Sigmoid colon (tissue), 7 donors: ENCODE measurements at regions of chr13 and their contacts with region 1.

Region 1: GRCh38 chr13:99501184-99501847 is at the start of gene TM9SF2:
- DNase-seq: peak; percentile 98
- H3K4me3 ChIP-seq: peak within 1 kb of the TSS; percentile 77 to 88 (median 81)
- H3K27ac ChIP-seq: peak within 1 kb of the TSS; percentile 89 to 91 (median 90)
- H3K4me1 ChIP-seq: peaks cover 5 to 49% (median 46%) of the 10 kb centered on the region in 4 donors
- H3K27me3 ChIP-seq: no peaks in the 10 kb centered on the region
- CTCF ChIP-seq: no peak
- EP300 ChIP-seq: peak in 1 of 4 donors; percentile 53
- POLR2A ChIP-seq: peak; percentile 19 to 80
- total RNA-seq, gene TM9SF2: 60.9 to 75.3 (median 64.5) TPM

Region 2: GRCh38 chr13:99200432-99201167 is 300.7 kb before region 1 on chr13 and contains the start of gene UBAC2:
- intact Hi-C with region 1: loop called (anchors 5 kb)
- DNase-seq: peak; percentile 97
- H3K4me3 ChIP-seq: peak within 1 kb of the TSS; percentile 67 to 92 (median 88)
- H3K27ac ChIP-seq: peak within 1 kb of the TSS; percentile 90 to 97 (median 96)
- H3K4me1 ChIP-seq: peaks cover 0 to 34% (median 10%) of the 10 kb centered on the region in 4 donors
- H3K27me3 ChIP-seq: no peaks in the 10 kb centered on the region
- CTCF ChIP-seq: peak in 2 of 4 experiments; percentile 6 to 15
- EP300 ChIP-seq: no peak
- POLR2A ChIP-seq: peak; percentile 87 to 88
- total RNA-seq, gene UBAC2: 47.4 to 54.6 (median 49.2) TPM

Region 3: DNA sequence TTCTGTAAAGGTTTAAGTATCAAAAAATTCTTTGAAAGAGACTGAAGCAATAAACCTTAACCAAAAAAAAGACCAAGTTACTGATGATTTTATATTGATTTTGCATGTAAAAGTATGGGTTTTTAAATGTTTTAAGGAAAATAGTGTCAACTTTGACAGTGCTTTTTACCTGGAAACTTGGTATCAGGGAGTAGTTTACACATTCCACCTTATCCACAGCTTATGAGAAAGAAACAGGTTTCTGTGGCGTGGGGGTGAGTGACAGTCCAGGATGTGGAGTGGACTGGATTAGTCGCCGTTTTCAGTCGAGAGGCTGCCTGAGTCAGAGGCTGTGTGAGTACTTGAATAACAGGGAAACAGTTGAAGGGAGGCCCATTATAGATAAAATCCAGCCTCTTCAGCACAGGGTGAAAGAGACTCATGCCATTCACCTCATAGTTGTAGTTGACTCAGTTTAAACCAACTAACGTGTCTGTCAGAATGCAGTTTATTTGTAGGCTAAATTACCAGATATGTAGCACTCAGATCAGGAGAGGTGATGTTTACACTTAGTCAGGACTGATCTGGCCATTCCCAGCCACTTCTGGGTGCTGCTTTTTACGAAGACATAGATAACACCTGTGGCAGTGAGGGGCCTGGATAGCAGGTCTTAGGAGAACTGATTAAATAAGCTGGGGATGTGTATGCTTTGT is 193.5 kb before region 1 on chr13:
- intact Hi-C with region 1: loop called (anchors 5 kb)
- DNase-seq: no peak
- H3K4me3 ChIP-seq: peak overlapping the region in 2 of 4 donors; percentile 48 to 50
- H3K27ac ChIP-seq: peak overlapping the region; percentile 64 to 83 (median 76)
- H3K4me1 ChIP-seq: peaks cover 0 to 63% (median 41%) of the 10 kb centered on the region in 4 donors
- H3K27me3 ChIP-seq: no peaks in the 10 kb centered on the region
- CTCF ChIP-seq: no peak
- EP300 ChIP-seq: no peak
- POLR2A ChIP-seq: no peak

Region 4: DNA sequence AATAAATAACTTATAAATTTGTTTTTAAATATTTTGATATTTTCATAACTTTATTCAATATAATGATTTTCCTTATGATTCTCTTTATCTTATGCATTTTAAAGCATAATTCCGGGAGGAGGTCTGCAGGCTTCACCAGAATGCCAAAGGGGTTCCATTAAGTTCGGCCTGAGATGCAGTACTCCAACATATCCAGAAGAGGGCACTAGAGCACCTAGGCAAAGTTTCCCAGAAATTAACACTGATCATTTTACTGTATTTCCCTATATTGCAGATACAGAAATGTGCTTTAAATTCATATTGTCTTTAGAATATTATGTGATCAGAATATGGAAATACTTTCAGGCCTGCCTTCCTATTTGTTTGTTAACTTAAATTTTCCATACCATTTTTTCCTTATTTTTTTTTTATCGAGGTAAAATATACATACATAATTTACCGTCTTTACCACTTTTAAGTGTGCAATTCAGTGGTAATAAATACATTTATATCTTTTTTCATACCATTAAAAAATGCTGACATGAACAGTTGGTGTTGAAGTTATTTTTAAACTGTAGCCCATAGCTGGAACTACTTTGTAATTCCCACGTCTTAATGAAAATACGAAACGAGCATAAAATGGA is 58.9 kb before region 1 on chr13:
- intact Hi-C with region 1: loop called (anchors 5 kb)
- DNase-seq: no peak
- H3K4me3 ChIP-seq: no peak overlapping the region
- H3K27ac ChIP-seq: no peak overlapping the region
- H3K4me1 ChIP-seq: no peaks in the 10 kb centered on the region
- H3K27me3 ChIP-seq: no peaks in the 10 kb centered on the region
- CTCF ChIP-seq: peak; percentile 49 to 96 (median 86)
- EP300 ChIP-seq: no peak
- POLR2A ChIP-seq: no peak

Region 5: DNA sequence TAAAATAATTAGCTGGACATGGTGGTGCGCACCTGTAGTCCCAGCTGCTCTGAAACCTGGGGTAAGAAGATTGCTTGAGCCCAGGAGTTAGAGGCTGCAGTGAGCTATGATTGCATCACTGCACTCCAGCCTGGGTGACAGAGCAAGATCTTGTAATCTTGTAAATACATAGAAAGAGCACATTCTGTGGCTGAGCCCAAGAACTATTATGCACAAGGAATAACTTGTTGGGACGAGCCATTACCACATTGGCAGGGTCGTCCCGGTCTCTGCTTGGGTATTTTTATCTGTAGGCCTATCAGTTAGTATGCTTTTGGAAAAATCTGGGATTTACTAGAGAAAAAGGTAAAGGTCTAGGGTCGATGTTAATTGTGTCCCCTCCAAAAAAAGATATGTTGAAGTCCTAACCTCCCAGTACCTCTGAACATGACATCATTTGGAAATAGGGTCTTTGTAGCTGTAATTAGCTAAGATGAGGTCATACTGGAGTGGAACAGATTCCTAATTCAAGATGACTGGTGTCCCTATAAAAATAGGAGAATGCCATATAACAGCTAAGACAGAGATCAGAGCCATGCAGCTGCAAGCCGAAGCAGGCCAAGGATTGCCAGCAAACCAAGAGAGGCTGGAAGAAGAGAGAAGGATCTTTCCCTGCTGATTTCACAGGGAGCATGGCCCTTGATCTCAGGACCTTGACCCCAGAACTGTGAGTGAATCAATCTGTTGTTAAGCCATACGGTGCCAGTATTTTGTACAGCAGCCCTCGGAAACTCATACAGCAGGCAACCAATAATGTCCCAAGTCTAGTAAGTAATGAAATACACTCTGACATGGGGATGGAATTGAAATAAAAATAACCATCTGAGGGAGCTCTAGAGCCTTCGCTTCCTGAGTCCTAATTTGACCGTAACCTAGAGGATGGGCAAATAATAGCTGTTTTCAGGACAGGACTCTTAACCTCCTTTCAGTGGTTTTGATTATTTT is 76.9 kb after region 1 on chr13:
- intact Hi-C with region 1: no loop called
- DNase-seq: no peak
- H3K4me3 ChIP-seq: no peak overlapping the region
- H3K27ac ChIP-seq: no peak overlapping the region
- H3K4me1 ChIP-seq: no peaks in the 10 kb centered on the region
- H3K27me3 ChIP-seq: peaks cover 0 to 4% (median 0%) of the 10 kb centered on the region in 3 donors
- CTCF ChIP-seq: no peak
- EP300 ChIP-seq: no peak
- POLR2A ChIP-seq: no peak

Region 6: DNA sequence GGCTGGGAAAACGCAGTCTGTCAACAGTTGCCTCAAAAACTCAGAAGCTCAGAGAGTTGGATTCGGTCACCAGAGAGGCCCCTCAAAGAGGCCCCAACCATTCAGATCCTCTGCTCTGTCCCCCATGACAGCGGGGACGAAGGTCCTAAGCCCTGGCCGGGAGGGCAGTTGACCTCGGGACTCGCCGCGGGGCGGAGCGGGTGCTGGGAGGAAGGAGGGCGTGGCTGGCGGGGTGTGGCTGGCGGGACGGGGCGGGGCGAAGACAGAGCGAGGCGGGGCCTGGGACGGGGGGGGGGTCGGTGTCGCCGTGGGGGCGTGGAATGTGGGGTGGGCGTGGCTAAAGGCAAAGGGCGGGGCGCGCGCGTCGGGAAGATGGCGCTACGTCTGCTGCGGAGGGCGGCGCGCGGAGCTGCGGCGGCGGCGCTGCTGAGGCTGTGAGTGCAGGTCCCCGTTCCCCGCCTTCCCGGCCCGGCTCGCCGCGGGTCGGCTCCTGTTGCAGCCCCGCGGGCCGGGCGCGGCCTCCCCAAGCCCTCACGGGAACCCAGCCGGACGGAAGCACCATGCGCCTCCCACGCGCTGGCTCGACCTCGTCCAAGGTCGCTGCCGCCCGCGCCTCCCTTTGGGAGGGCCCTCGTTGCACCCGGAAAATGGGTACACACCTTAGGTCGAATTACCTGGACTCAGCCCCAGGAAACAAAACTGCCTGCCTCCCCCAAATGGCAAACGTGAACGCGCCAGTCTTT is 105.2 kb after region 1 on chr13:
- intact Hi-C with region 1: loop called (anchors 5 kb)
- DNase-seq: peak; percentile 94
- H3K4me3 ChIP-seq: peak within 1 kb of the TSS; percentile 71 to 87 (median 86)
- H3K27ac ChIP-seq: peak within 1 kb of the TSS; percentile 82 to 85 (median 83)
- H3K4me1 ChIP-seq: peaks cover 0 to 14% (median 4%) of the 10 kb centered on the region in 4 donors
- H3K27me3 ChIP-seq: no peaks in the 10 kb centered on the region
- CTCF ChIP-seq: no peak
- EP300 ChIP-seq: no peak
- POLR2A ChIP-seq: no peak

Region 7: GRCh38 chr13:99969919-99970621 is 468.8 kb after region 1 on chr13:
- intact Hi-C with region 1: no loop called
- DNase-seq: no peak
- H3K4me3 ChIP-seq: peak overlapping the region in 3 of 4 donors; percentile 4 to 25 (median 22)
- H3K27ac ChIP-seq: no peak overlapping the region
- H3K4me1 ChIP-seq: peaks cover 0 to 43% (median 38%) of the 10 kb centered on the region in 4 donors
- H3K27me3 ChIP-seq: peaks cover 81 to 99% (median 97%) of the 10 kb centered on the region in 3 donors
- CTCF ChIP-seq: no peak
- EP300 ChIP-seq: no peak
- POLR2A ChIP-seq: no peak

Region 8: DNA sequence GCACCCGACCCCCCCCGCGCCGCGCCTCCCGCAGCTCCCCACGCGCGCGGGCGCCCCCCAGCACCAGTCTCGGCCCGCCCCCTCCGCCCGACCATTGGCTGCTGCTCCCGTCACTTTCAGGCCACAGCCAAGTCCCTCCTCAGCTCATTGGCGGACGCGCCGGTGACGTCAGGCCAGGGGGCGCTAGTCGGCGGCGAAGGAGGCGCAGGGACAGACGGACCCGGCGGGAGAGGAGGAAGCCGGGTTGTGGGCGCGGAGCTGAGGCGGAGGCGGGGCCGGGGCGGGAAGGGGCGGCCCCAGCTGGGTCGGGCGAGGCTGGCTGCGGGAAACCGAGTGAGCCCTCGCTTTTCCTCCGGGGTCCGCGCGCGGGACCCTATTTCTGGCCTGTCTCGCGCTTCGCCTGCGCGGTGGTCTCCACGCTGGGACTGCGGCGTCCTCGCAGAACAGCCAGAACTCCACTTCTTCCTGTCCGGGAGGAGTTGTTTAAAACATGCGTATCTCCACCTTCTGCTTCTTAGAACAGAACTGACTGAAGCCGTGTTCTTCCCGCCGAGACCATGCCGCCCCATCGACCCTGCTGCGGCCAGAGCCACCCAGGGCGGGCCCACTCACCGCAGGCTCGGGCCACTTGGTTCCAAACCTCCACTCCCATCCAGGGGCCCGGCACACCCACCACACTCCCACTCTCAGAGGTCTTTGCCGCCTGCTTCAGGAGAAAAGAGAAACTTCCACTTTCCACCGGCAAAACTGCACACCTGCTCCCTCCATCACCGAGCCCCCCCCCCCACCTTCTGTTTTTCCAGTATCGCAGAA is 1173.7 kb after region 1 on chr13:
- intact Hi-C with region 1: loop called (anchors 2 kb)
- DNase-seq: peak; percentile 100
- H3K4me3 ChIP-seq: peak overlapping the region; percentile 55 to 96 (median 83)
- H3K27ac ChIP-seq: peak overlapping the region; percentile 87 to 95 (median 92)
- H3K4me1 ChIP-seq: peaks cover 0 to 21% (median 16%) of the 10 kb centered on the region in 4 donors
- H3K27me3 ChIP-seq: no peaks in the 10 kb centered on the region
- CTCF ChIP-seq: no peak
- EP300 ChIP-seq: no peak
- POLR2A ChIP-seq: peak; percentile 29 to 41